ENCODE measurements at regions of chr9 and their contacts with region 1.

Region 1: GRCh38 chr9:130780865-130781504 is 54.1 kb upstream of the ABL1 start:
- DNase-seq: peak; percentile 61 to 75
- ATAC-seq: peak; percentile 89 to 90
- H3K4me3 ChIP-seq: peak overlapping the region in 3 of 4 donors; percentile 9 to 33 (median 12)
- H3K27ac ChIP-seq: peak overlapping the region; percentile 58 to 75 (median 72)
- H3K4me1 ChIP-seq: peaks cover 37 to 41% of the 10 kb centered on the region in 2 donors
- H3K27me3 ChIP-seq: no peaks in the 10 kb centered on the region
- CTCF ChIP-seq: no peak
- POLR2A ChIP-seq: peak; percentile 46 to 78

Region 2: DNA sequence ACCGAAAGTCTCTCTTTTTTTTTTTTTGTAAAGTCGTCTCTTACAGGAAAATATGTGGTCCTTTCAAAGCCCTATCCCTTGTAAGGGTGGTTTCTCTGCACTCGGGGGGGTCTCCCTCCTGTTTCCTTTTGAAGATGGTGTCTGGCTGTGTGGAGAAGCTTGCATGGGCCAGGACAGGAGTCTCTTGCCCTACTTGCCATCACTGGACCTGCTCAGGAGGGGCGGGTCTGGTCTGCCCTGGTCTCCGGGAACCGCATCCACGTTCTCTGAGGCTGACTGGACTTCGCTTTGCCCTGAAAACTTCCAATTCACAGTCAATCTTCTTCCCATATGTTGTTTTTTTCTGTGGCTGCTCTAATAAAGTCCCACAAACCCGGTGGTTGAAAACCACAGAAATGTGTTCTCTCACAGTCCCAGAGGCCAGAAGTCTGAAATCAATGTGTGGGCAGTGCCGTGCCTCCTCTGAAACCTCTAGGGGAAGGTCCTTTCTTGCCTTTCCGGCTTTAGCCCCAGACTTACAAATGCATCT is 1510.0 kb before region 1 on chr9:
- in situ Hi-C with region 1: no loop called
- intact Hi-C with region 1: no loop called
- DNase-seq: no peak
- ATAC-seq: no peak
- H3K4me3 ChIP-seq: no peak overlapping the region
- H3K27ac ChIP-seq: no peak overlapping the region
- H3K4me1 ChIP-seq: no peaks in the 10 kb centered on the region
- H3K27me3 ChIP-seq: no peaks in the 10 kb centered on the region
- CTCF ChIP-seq: no peak
- POLR2A ChIP-seq: no peak

Region 3: DNA sequence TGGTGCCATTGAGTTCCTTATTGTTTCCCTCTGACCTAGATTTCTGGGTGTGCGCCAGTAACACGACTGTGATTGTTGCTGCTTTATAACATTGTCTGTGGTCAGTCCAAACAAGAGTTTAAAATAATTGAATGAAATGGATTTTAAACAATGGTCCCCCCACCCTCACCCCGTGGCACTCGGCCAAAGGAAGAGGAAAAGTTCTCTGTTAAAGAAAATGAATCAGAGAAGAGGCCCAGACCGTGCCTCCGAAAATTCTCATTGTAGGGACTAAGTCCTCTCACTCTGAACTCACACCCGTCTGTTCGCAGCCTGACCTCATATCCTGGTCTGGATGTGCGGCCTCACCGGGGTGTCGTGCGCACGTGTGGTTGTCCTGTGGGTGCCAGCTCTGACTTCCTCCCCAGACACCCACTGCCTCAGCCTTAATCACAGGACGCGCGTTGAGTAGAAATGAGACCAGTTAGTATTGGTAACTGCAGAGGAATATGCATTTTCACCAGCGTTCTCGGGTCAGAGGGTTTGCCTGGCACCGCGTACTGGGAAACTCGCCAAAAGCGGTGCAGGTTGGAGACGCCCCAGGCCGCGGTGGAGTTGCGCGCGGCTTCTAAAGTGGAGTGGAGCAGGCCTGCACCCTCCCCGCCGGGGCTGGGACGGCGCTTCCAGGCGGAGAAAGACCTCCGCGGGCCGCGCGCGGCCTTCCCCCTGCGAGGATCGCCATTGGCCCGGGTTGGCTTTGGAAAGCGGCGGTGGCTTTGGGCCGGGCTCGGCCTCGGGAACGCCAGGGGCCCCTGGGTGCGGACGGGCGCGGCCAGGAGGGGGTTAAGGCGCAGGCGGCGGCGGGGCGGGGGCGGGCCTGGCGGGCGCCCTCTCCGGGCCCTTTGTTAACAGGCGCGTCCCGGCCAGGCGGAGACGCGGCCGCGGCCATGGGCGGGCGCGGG is 53.7 kb after region 1 on chr9 and contains the start of gene ABL1:
- in situ Hi-C with region 1: no loop called
- intact Hi-C with region 1: loop called (anchors 5 kb)
- DNase-seq: peak; percentile 48 to 63
- ATAC-seq: peak; percentile 81 to 82
- H3K4me3 ChIP-seq: peak within 1 kb of the TSS; percentile 72 to 79 (median 75)
- H3K27ac ChIP-seq: peak within 1 kb of the TSS; percentile 86 to 90 (median 88)
- H3K4me1 ChIP-seq: peaks cover 56 to 68% of the 10 kb centered on the region in 2 donors
- H3K27me3 ChIP-seq: no peaks in the 10 kb centered on the region
- CTCF ChIP-seq: peak in 1 of 5 experiments; percentile 14
- POLR2A ChIP-seq: peak in 1 of 2 donors; percentile 9
- total RNA-seq, gene ABL1: 22.8 to 55.5 (median 28.5) TPM

Region 4: GRCh38 chr9:130847327-130848217 is 66.6 kb after region 1 on chr9:
- in situ Hi-C with region 1: no loop called
- intact Hi-C with region 1: loop called (anchors 2 kb)
- DNase-seq: peak; percentile 72 to 86
- ATAC-seq: peak; percentile 80 to 88
- H3K4me3 ChIP-seq: no peak overlapping the region
- H3K27ac ChIP-seq: peak overlapping the region; percentile 72 to 78 (median 78)
- H3K4me1 ChIP-seq: peaks cover 51 to 57% of the 10 kb centered on the region in 2 donors
- H3K27me3 ChIP-seq: no peaks in the 10 kb centered on the region
- CTCF ChIP-seq: no peak
- POLR2A ChIP-seq: peak; percentile 18 to 44

Region 5: GRCh38 chr9:130912932-130913598 is 132.1 kb after region 1 on chr9:
- in situ Hi-C with region 1: no loop called
- intact Hi-C with region 1: no loop called
- DNase-seq: peak in 1 of 2 donors; percentile 28
- ATAC-seq: peak; percentile 12 to 36
- H3K4me3 ChIP-seq: peak overlapping the region in 3 of 4 donors; percentile 18 to 23 (median 20)
- H3K27ac ChIP-seq: no peak overlapping the region
- H3K4me1 ChIP-seq: no peaks in the 10 kb centered on the region
- H3K27me3 ChIP-seq: peaks cover 17 to 40% (median 27%) of the 10 kb centered on the region in 3 donors
- CTCF ChIP-seq: no peak
- POLR2A ChIP-seq: no peak

Region 6: DNA sequence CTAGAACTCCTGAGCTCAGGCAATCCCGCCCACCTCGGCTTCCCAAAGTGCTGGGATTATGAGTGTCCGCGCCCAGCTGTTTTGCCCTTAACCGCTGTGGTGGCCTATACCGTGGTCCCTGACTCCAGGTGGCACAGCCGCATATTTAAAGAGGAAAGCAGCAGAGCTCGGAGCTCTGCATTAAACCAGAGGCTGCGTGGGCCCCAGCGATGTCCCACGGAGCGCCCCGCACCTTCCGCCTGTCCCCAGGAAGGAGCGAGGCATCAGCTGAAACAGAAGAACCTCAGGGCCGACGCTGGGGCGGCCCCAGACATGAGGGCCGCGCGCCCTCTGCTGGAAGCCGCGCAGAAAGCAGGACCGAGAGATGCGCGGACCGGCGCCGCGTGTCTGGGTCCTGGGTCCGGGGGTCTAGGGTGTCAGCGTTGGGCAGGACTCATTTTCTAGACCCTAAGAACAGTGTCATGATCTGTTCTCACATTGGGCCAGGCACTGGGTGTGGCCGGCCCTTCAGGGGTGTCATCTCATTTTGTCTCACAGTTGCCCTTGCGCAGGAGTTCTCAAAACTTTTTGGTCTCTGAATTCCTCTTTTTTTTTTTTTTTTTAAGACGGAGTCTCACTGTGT is 265.7 kb after region 1 on chr9:
- in situ Hi-C with region 1: no loop called
- intact Hi-C with region 1: no loop called
- DNase-seq: no peak
- ATAC-seq: peak; percentile 69
- H3K4me3 ChIP-seq: no peak overlapping the region
- H3K27ac ChIP-seq: no peak overlapping the region
- H3K4me1 ChIP-seq: no peaks in the 10 kb centered on the region
- H3K27me3 ChIP-seq: no peaks in the 10 kb centered on the region
- CTCF ChIP-seq: peak; percentile 59 to 90 (median 79)
- POLR2A ChIP-seq: no peak

Region 7: DNA sequence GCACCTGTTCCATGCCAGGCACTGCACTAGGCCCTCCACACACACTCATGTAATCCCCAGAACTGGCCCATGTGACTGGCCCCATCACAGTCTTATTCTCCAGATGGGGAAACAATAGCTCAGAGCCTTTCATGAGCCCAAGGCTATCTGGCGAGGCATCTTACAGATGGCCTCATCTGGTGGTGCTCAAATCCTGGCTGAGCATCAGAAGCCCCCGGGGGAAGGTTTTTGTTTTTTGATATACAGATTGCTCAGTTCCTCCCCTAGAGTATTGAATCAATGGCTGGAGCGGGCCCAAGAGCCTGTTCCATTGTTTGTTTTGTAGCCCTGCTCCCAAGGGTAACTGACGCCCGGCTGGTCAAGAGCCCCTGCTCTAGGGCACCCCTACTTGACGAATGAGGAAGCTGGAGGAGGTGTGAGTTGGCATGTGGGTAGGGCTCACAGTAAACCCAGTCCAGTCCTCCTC is 1104.2 kb after region 1 on chr9:
- in situ Hi-C with region 1: no loop called
- intact Hi-C with region 1: no loop called
- DNase-seq: no peak
- ATAC-seq: no peak
- H3K4me3 ChIP-seq: no peak overlapping the region
- H3K27ac ChIP-seq: no peak overlapping the region
- H3K4me1 ChIP-seq: peaks cover 7 to 10% of the 10 kb centered on the region in 2 donors
- H3K27me3 ChIP-seq: no peaks in the 10 kb centered on the region
- CTCF ChIP-seq: no peak
- POLR2A ChIP-seq: no peak

Measured in gastrocnemius medialis (tissue), 4 donors.